A673 (cell line): ENCODE measurements at regions of chr6 and their contacts with region 1.

Region 1: GRCh38 chr6:90940812-90941481 is 354.1 kb upstream of the MAP3K7 start:
- DNase-seq: peak; percentile 84
- H3K4me3 ChIP-seq: no peak overlapping the region
- H3K27ac ChIP-seq: no peak overlapping the region
- H3K4me1 ChIP-seq: peaks cover 6% of the 10 kb centered on the region
- H3K27me3 ChIP-seq: no peaks in the 10 kb centered on the region
- CTCF ChIP-seq: peak; percentile 72

Region 2: DNA sequence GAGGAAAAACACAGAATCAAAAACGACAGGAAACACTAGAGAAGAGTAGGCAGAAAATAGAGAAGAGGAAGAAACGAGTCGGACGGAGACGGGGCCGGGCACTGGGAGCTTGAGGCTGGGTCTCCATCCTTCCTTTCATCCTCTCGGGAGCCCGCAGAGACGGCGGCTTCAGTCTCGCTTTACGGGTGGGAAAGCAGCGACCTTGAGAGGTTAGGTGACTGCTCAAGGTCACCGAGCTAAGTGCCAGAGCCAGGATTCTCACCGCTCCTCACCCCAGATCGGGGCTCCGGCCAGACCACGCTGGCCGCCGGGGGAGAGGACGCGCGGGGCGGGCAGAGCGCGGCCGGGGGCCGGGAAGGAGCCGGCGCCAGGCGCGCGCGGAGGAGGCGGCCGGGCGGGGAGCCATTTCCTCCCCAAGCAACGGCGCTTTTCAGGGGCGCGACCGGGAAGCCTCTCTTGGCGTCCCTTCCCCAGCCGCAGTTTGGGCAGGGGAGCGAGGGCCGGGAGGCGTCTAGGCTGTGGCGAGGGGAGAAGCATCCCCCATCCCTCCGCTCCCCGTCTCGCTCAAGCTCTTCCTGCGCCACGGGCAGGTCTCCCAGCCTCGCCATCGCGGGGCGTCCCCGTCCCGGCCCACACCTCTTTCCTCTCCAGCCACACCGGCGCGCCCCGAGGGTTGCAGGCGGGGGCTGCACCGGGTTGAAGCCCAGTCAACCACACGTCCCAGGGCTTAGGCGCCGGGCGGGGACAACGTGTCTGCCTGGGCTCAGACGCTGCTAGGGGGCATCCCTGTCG is 330.0 kb before region 1 on chr6:
- CTCF ChIA-PET with region 1: no interaction called
- POLR2A ChIA-PET with region 1: no interaction called
- intact Hi-C with region 1: loop called (anchors 1 kb)
- DNase-seq: peak; percentile 56
- H3K4me3 ChIP-seq: peak overlapping the region; percentile 67
- H3K27ac ChIP-seq: no peak overlapping the region
- H3K4me1 ChIP-seq: peaks cover 10% of the 10 kb centered on the region
- H3K27me3 ChIP-seq: no peaks in the 10 kb centered on the region
- CTCF ChIP-seq: no peak

Region 3: GRCh38 chr6:91081452-91082067 is 140.6 kb after region 1 on chr6:
- CTCF ChIA-PET with region 1: interaction called, 3 read pairs
- POLR2A ChIA-PET with region 1: no interaction called
- intact Hi-C with region 1: loop called (anchors 5 kb)
- DNase-seq: peak; percentile 88
- H3K4me3 ChIP-seq: no peak overlapping the region
- H3K27ac ChIP-seq: peak overlapping the region; percentile 56
- H3K4me1 ChIP-seq: peaks cover 32% of the 10 kb centered on the region
- H3K27me3 ChIP-seq: no peaks in the 10 kb centered on the region
- CTCF ChIP-seq: peak; percentile 77

Region 4: GRCh38 chr6:91626911-91627310 is 686.0 kb after region 1 on chr6:
- CTCF ChIA-PET with region 1: no interaction called
- POLR2A ChIA-PET with region 1: no interaction called
- intact Hi-C with region 1: no loop called
- DNase-seq: no peak
- H3K4me3 ChIP-seq: no peak overlapping the region
- H3K27ac ChIP-seq: no peak overlapping the region
- H3K4me1 ChIP-seq: no peaks in the 10 kb centered on the region
- H3K27me3 ChIP-seq: no peaks in the 10 kb centered on the region
- CTCF ChIP-seq: no peak

Region 5: GRCh38 chr6:92132451-92132850 is 1191.5 kb after region 1 on chr6:
- CTCF ChIA-PET with region 1: no interaction called
- POLR2A ChIA-PET with region 1: no interaction called
- intact Hi-C with region 1: loop called (anchors 10 kb)
- DNase-seq: no peak
- H3K4me3 ChIP-seq: no peak overlapping the region
- H3K27ac ChIP-seq: no peak overlapping the region
- H3K4me1 ChIP-seq: no peaks in the 10 kb centered on the region
- H3K27me3 ChIP-seq: no peaks in the 10 kb centered on the region
- CTCF ChIP-seq: no peak

Region 6: GRCh38 chr6:92777146-92777740 is 1836.3 kb after region 1 on chr6:
- CTCF ChIA-PET with region 1: no interaction called
- POLR2A ChIA-PET with region 1: no interaction called
- intact Hi-C with region 1: loop called (anchors 10 kb)
- DNase-seq: peak; percentile 50
- H3K4me3 ChIP-seq: no peak overlapping the region
- H3K27ac ChIP-seq: no peak overlapping the region
- H3K4me1 ChIP-seq: peaks cover 13% of the 10 kb centered on the region
- H3K27me3 ChIP-seq: no peaks in the 10 kb centered on the region
- CTCF ChIP-seq: peak; percentile 66